Right cardiac atrium (tissue), 5 donors: ENCODE measurements at regions of chr3 and their contacts with region 1.

Region 1: GRCh38 chr3:159260049-159260662 is 458.3 kb downstream of the MFSD1 start:
- DNase-seq: peak in 2 of 3 donors; percentile 18 to 49
- ATAC-seq: no peak
- H3K4me3 ChIP-seq: no peak overlapping the region
- H3K27ac ChIP-seq: no peak overlapping the region
- H3K4me1 ChIP-seq: no peaks in the 10 kb centered on the region
- H3K27me3 ChIP-seq: no peaks in the 10 kb centered on the region

Region 2: DNA sequence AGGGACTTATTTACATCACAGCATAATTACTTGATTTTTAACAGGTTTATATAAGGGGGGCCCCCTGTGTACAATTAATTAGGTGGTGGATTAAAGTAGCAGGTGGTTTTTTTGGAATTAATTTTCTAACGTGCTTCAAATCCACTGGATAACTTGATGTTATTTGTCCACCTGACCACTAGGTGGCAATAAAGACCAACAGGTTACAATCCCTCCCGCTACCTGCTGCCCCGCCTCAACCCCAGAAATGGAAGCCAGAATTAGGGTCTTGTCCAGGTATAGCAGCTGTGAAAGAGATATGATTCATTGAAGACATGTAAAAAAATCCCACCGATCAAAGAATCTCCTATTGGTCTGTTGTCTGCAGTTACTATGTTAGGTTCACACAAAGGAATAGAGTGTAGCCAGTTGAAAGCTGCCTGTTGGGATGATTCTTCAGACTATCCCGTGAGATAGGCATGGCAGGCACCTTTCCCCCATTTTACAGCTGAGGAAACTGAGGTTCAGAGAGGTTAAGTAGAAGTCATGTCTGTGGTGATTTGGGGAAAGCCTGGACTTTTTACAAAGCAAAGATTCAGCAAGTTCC is 414.3 kb before region 1 on chr3:
- intact Hi-C with region 1: loop called in 3 of 4 experiments (anchors 1 to 10 kb)
- DNase-seq: no peak
- ATAC-seq: no peak
- H3K4me3 ChIP-seq: no peak overlapping the region
- H3K27ac ChIP-seq: no peak overlapping the region
- H3K4me1 ChIP-seq: no peaks in the 10 kb centered on the region
- H3K27me3 ChIP-seq: no peaks in the 10 kb centered on the region

Region 3: DNA sequence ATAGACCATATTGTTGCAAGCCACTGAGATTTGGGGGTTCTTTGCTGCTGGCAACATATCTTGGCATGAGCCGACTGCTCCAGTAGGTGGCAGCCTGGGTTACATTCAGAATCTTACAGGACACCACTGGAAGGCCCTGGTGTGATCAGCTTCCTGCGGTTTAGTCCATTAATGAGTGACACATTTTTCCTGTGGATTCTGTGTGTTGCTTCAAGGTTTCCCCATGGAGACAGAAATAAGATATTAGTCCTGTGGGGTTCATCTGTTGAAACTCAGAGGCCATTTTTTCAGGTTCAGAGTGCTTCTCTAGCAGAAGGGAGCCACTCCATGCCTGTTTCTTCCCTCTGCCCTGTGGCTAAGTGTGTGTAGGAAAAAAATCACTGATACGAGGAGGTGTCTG is 342.1 kb before region 1 on chr3:
- intact Hi-C with region 1: loop called in 3 of 4 experiments (anchors 5 to 10 kb)
- DNase-seq: peak; percentile 18 to 49 (median 43)
- ATAC-seq: peak in 1 of 2 donors; percentile 49
- H3K4me3 ChIP-seq: no peak overlapping the region
- H3K27ac ChIP-seq: no peak overlapping the region
- H3K4me1 ChIP-seq: no peaks in the 10 kb centered on the region
- H3K27me3 ChIP-seq: no peaks in the 10 kb centered on the region

Region 4: DNA sequence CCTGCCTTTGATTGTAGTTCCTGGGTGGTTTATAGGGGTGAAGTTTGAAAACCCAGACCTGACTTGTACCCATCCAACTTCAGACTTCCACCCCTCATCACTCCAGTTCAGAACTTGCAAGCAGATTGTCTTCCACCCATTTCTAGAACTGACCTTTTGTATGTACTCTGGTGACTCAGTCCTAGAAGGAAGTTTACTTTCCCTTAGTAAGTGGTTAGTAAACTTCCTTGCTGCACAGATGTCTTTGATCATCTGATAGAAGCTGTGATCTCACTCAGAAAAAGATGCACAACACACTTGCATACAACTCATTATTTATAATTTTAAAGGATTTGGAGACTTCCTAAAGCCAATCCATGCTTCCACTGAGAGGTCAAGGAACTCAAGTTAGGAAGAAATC is 90.3 kb before region 1 on chr3:
- intact Hi-C with region 1: no loop called
- DNase-seq: no peak
- ATAC-seq: no peak
- H3K4me3 ChIP-seq: no peak overlapping the region
- H3K27ac ChIP-seq: no peak overlapping the region
- H3K4me1 ChIP-seq: no peaks in the 10 kb centered on the region
- H3K27me3 ChIP-seq: no peaks in the 10 kb centered on the region

Region 5: DNA sequence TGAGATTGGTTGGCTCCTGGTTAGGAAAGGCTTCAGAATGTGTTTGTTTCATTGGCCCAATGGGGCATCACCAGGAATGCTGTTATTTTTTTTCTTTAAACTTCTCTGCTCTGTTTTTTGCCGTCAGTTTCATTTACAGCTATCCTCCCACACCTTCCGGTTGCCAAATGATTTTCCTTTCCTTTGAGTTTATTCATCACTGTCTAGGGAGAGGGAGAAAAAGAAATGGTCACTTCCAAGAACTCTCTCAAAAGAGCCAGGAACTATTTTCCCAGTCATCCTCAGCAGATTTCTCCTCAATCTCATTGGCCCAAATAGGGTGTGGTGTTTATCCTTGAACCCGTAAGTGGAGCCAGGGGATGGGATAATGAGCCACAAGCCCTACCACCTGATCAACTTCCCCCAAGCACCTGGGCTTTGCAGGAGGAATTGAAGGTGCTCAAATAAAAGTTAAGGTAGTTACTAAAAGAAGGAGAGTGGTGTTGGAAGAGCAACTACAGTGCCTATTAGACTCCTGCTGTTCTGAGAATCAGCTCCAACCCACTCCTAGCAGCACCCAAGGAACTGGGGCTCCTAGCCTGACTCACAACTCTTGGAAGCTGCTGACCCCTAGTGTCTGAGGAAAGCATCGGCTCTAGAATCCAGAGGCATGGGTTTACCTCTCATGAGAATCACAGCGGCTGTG is 544.7 kb after region 1 on chr3:
- intact Hi-C with region 1: loop called in 2 of 4 experiments (anchors 5 kb)
- DNase-seq: peak; percentile 54 to 75 (median 64)
- ATAC-seq: peak; percentile 94
- H3K4me3 ChIP-seq: no peak overlapping the region
- H3K27ac ChIP-seq: no peak overlapping the region
- H3K4me1 ChIP-seq: no peaks in the 10 kb centered on the region
- H3K27me3 ChIP-seq: no peaks in the 10 kb centered on the region

Region 6: DNA sequence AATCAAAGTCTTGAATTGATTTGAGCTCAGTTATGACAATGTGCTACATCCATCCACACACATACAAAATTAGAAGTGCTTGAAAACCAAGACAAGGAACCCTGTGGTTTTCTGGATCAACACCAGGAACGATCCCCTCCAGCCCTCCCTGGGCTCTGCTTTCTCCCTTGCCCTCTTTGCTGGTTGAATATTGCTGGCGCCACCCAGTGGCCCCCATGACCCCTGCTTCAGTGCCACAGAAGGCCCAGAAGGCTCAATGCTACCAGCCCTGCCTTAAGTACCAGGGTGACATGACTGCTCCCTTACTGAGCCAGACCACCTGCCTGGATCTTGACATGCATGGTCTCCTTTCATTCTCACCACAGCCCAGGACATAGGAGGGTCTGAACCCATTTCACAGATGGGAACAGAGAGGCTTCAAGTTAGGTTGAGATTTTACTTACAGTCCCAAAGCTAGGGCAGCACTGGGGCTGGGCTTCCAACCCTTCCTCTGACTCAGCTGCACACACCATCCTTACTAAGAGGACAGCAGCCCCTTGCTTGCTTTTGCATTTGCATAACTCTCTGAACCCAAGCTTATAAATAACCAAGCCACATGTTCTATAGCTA is 743.5 kb after region 1 on chr3:
- intact Hi-C with region 1: loop called in 2 of 4 experiments (anchors 10 kb)
- DNase-seq: peak; percentile 37 to 75 (median 74)
- ATAC-seq: peak; percentile 79 to 84
- H3K4me3 ChIP-seq: no peak overlapping the region
- H3K27ac ChIP-seq: no peak overlapping the region
- H3K4me1 ChIP-seq: no peaks in the 10 kb centered on the region
- H3K27me3 ChIP-seq: no peaks in the 10 kb centered on the region

Region 7: DNA sequence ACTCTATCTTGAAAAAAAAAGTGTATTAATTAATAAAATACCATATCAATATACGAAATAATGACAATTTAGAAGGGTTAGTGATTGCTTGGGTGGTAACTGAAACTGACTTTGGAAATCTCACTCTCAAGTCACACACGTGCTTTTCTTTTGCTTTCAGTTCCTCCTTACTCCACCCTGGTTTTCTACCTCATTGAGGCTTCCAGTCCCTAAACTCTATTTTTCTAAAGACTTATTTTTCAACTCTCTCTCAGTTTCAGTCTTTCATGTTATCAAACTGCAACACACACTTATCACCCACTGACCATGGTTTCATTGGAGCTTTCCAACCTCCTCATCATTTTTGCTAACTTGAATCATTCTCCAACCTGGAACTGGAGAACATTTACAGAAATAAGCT is 752.0 kb after region 1 on chr3:
- intact Hi-C with region 1: loop called in 3 of 4 experiments (anchors 10 kb)
- DNase-seq: no peak
- ATAC-seq: no peak
- H3K4me3 ChIP-seq: no peak overlapping the region
- H3K27ac ChIP-seq: no peak overlapping the region
- H3K4me1 ChIP-seq: no peaks in the 10 kb centered on the region
- H3K27me3 ChIP-seq: no peaks in the 10 kb centered on the region